ENCODE measurements at regions of chr7 and their contacts with region 1.

Region 1: GRCh38 chr7:90595801-90596671 is at the start of gene CDK14:
- DNase-seq: peak; percentile 79
- ATAC-seq: peak; percentile 66
- H3K4me3 Mint-ChIP-seq: peak within 1 kb of the TSS; percentile 96
- H3K27ac Mint-ChIP-seq: peak within 1 kb of the TSS; percentile 95
- H3K4me1 Mint-ChIP-seq: peaks cover 56% of the 10 kb centered on the region
- H3K27me3 Mint-ChIP-seq: no peaks in the 10 kb centered on the region
- CTCF ChIP-seq: no peak
- total RNA-seq, gene CDK14: 130 and 140 TPM in 2 replicates

Region 2: DNA sequence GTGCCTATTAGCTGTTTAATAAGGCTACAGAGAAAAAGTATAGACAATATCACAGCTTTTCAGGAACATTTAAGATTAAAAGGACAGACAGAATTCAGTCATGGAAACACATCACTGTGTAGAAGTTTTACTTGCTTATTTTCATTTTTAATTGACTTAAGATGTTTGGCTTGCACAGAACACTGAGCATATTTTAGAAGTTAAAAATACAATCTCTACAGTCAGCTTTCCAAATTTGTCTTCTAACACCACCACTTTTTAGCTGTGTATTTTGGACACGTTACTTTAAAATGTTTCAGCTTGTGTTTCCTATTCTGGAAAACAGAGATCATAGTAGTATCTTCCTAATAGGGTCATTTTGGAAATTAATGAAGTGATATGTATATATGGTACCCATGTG is 339.3 kb before region 1 on chr7:
- CTCF ChIA-PET with region 1: no interaction called
- POLR2A ChIA-PET with region 1: no interaction called
- intact Hi-C with region 1: no loop called
- DNase-seq: no peak
- ATAC-seq: no peak
- H3K4me3 Mint-ChIP-seq: no peak overlapping the region
- H3K27ac Mint-ChIP-seq: no peak overlapping the region
- H3K4me1 Mint-ChIP-seq: no peaks in the 10 kb centered on the region
- H3K27me3 Mint-ChIP-seq: peaks cover 11% of the 10 kb centered on the region
- CTCF ChIP-seq: no peak

Region 3: GRCh38 chr7:90403174-90404113 is 192.6 kb before region 1 on chr7 and contains the start of gene CLDN12:
- CTCF ChIA-PET with region 1: no interaction called
- POLR2A ChIA-PET with region 1: no interaction called
- intact Hi-C with region 1: loop called (anchors 1 kb)
- DNase-seq: peak; percentile 57
- ATAC-seq: peak; percentile 94
- H3K4me3 Mint-ChIP-seq: peak within 1 kb of the TSS; percentile 97
- H3K27ac Mint-ChIP-seq: peak within 1 kb of the TSS; percentile 89
- H3K4me1 Mint-ChIP-seq: peaks cover 15% of the 10 kb centered on the region
- H3K27me3 Mint-ChIP-seq: no peaks in the 10 kb centered on the region
- CTCF ChIP-seq: no peak
- total RNA-seq, gene CLDN12: 6.2 and 9.0 TPM in 2 replicates

Region 4: GRCh38 chr7:90560730-90561129 is 35.3 kb before region 1 on chr7:
- CTCF ChIA-PET with region 1: no interaction called
- POLR2A ChIA-PET with region 1: no interaction called
- intact Hi-C with region 1: no loop called
- DNase-seq: no peak
- ATAC-seq: no peak
- H3K4me3 Mint-ChIP-seq: no peak overlapping the region
- H3K27ac Mint-ChIP-seq: no peak overlapping the region
- H3K4me1 Mint-ChIP-seq: no peaks in the 10 kb centered on the region
- H3K27me3 Mint-ChIP-seq: no peaks in the 10 kb centered on the region
- CTCF ChIP-seq: no peak

Region 5: DNA sequence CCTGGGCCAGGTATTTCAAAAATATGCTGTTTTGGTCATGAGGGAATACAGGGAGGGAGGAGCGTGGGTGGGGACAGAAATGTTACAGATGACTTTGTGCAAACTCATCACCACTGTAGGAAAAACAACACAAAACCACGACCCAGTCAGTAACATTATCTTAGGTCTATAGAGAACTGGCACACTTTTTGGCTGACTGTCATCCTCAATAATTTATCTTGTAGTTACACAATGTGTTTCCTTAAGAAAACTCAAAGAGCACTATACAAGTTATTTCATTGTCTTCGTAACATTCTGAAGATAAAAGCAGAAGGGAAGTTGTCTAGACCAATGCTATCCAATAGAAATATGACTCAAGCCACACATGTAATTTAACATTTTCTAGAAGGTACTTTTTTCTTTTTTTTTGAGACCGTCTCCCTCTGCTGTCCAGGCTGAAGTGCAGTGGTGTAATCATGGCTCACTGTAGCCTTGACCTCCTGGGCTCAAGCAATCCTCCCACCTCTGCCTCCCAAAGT is 16.8 kb before region 1 on chr7:
- CTCF ChIA-PET with region 1: no interaction called
- POLR2A ChIA-PET with region 1: no interaction called
- intact Hi-C with region 1: loop called (anchors 2 kb)
- DNase-seq: no peak
- ATAC-seq: no peak
- H3K4me3 Mint-ChIP-seq: no peak overlapping the region
- H3K27ac Mint-ChIP-seq: no peak overlapping the region
- H3K4me1 Mint-ChIP-seq: peaks cover 6% of the 10 kb centered on the region
- H3K27me3 Mint-ChIP-seq: no peaks in the 10 kb centered on the region
- CTCF ChIP-seq: no peak

Region 6: GRCh38 chr7:90629297-90629918 is 33.4 kb after region 1 on chr7:
- CTCF ChIA-PET with region 1: interaction called, 21 read pairs
- POLR2A ChIA-PET with region 1: interaction called, 5 read pairs
- intact Hi-C with region 1: loop called (anchors 1 kb)
- DNase-seq: no peak
- ATAC-seq: peak; percentile 86
- H3K4me3 Mint-ChIP-seq: no peak overlapping the region
- H3K27ac Mint-ChIP-seq: peak overlapping the region; percentile 19
- H3K4me1 Mint-ChIP-seq: peaks cover 16% of the 10 kb centered on the region
- H3K27me3 Mint-ChIP-seq: no peaks in the 10 kb centered on the region
- CTCF ChIP-seq: peak; percentile 68

Region 7: GRCh38 chr7:91034459-91035368 is 438.7 kb after region 1 on chr7:
- CTCF ChIA-PET with region 1: interaction called, 4 read pairs
- POLR2A ChIA-PET with region 1: no interaction called
- intact Hi-C with region 1: loop called (anchors 1 kb)
- DNase-seq: no peak
- ATAC-seq: peak; percentile 61
- H3K4me3 Mint-ChIP-seq: no peak overlapping the region
- H3K27ac Mint-ChIP-seq: no peak overlapping the region
- H3K4me1 Mint-ChIP-seq: peaks cover 5% of the 10 kb centered on the region
- H3K27me3 Mint-ChIP-seq: no peaks in the 10 kb centered on the region
- CTCF ChIP-seq: no peak

Region 8: DNA sequence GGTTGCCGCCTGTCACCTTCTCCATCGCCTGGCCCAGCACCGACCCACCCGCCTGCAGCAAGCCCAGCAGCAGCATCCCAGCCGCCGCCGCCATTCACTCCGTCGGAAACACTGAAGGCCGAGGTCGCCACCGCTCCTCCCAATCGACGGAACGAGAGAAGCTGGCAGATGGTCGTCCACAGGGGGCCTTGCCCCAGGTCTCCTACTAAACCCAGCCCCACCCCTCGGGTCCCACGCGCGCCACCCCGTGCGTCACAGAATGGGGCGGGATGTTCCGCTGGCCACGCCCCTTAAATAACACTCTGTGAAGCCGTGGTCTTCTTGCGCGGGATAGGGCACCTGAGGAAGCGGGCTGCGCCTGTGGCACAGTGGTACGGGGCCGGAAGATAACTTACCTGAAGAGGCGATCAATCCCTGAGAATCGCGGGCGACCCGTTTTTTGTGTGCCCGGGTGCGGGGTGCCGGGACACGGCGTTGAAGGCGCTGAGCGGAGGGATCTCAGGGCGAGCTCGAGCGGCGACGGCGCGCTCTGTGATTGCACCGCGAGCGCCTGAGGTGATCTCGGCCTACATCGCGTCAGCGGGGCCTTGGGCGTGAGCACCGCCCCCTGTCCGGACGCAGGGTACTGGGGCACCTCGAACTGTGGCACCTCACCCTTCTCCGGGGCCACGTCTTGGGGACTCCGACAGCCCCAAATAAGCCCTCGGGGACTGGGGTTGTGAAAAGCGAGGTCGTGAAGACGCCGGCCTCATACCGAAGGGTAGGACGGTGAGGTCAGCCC is 1538.4 kb after region 1 on chr7 and contains the start of gene CYP51A1:
- CTCF ChIA-PET with region 1: no interaction called
- POLR2A ChIA-PET with region 1: no interaction called
- intact Hi-C with region 1: loop called (anchors 10 kb)
- DNase-seq: peak; percentile 97
- ATAC-seq: peak; percentile 83
- H3K4me3 Mint-ChIP-seq: peak within 1 kb of the TSS; percentile 99
- H3K27ac Mint-ChIP-seq: peak within 1 kb of the TSS; percentile 100
- H3K4me1 Mint-ChIP-seq: peaks cover 47% of the 10 kb centered on the region
- H3K27me3 Mint-ChIP-seq: no peaks in the 10 kb centered on the region
- CTCF ChIP-seq: no peak
- total RNA-seq, gene CYP51A1: 90.9 and 92.8 TPM in 2 replicates

Measured in activated B cell treated with CpG ODN at 0.5 μM for 24 hours (primary cell).